ENCODE measurements at regions of chr2 and their contacts with region 1.

Region 1: DNA sequence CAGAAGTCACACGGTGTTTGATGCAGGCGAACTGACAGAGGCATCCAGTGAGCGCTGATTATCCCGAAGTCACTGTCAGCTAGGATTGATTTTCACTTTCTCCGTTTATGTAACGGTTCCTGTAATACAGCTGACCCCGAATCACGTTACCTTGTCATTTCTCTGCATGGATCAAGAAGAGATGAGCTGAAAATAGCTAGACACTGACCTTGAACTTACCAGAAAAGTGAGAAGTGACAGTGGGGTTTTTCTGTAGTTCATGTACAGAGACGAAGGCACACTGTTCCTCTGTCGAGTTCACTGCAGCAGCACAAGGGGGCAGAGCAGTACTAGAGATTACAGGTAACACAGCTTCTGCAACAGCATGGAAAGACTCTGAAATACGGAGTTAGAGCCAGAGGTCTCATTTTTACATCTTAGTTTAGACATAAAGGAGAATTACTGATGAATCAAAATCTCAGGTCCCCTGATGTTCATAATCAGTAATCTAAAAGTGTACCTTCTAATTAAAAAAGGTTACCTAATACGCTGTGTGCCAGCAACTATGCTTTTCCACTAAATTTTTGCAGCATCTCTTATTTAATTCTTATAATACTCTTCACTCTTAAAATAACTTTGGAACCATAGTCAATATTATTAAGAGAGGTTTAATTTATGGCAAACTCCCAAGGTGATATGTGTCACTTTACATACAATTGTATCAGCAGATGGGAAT is 33.1 kb downstream of the ARHGAP15 start:
- DNase-seq: peak; percentile 50 to 55
- H3K4me3 ChIP-seq: no peak overlapping the region
- H3K4me3 Mint-ChIP-seq: no peak overlapping the region
- H3K27ac Mint-ChIP-seq: no peak overlapping the region
- H3K4me1 ChIP-seq: no peaks in the 10 kb centered on the region
- H3K4me1 Mint-ChIP-seq: no peaks in the 10 kb centered on the region
- H3K27me3 ChIP-seq: no peaks in the 10 kb centered on the region; the same call in 1 of the 2 replicates
- H3K27me3 Mint-ChIP-seq: peaks cover 23% of the 10 kb centered on the region
- CTCF ChIP-seq: peak; percentile 52 to 82

Region 2: DNA sequence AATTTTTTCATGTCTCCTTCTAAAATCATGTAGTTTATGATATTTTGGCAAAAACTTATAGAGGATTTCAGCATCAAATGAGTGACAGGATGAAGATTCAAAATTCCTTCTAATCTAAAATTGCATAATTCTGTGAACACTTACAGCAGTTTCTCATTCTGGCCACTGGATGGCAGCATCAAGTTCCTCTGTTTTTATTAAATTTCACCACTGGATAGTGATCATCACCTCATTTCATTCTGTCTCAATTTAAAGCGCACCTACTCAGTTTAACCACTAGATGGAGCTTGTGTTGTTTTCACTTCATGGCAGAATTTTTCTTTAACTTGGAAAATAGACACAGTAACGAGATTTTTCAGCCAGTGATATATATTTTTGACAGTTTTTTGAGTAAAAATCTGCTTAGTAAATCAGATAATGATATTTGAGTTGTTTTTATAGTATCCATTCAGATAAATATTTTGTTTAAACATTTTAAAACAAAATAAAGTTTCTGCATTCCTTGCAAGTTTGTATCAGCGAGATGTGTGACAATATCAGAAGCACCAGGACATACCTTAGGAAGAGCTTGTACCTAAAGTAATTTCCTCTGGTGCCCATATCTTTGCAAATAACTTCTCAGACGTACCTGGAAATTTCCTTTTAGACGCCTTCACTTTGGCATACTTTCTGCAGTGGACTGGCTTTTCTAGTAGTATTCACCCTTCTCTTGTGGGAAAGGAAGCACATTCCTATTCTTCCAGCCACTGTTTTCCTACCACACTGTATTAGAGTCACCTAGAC is 127.8 kb before region 1 on chr2:
- CTCF ChIA-PET with region 1: no interaction called
- POLR2A ChIA-PET with region 1: no interaction called
- intact Hi-C with region 1: loop called (anchors 2 kb)
- DNase-seq: peak; percentile 61 to 69
- H3K4me3 ChIP-seq: no peak overlapping the region
- H3K4me3 Mint-ChIP-seq: no peak overlapping the region
- H3K27ac Mint-ChIP-seq: no peak overlapping the region
- H3K4me1 ChIP-seq: peaks cover 12% of the 10 kb centered on the region
- H3K4me1 Mint-ChIP-seq: peaks cover 10% of the 10 kb centered on the region
- H3K27me3 ChIP-seq: no peaks in the 10 kb centered on the region
- H3K27me3 Mint-ChIP-seq: no peaks in the 10 kb centered on the region
- CTCF ChIP-seq: peak; percentile 93

Region 3: DNA sequence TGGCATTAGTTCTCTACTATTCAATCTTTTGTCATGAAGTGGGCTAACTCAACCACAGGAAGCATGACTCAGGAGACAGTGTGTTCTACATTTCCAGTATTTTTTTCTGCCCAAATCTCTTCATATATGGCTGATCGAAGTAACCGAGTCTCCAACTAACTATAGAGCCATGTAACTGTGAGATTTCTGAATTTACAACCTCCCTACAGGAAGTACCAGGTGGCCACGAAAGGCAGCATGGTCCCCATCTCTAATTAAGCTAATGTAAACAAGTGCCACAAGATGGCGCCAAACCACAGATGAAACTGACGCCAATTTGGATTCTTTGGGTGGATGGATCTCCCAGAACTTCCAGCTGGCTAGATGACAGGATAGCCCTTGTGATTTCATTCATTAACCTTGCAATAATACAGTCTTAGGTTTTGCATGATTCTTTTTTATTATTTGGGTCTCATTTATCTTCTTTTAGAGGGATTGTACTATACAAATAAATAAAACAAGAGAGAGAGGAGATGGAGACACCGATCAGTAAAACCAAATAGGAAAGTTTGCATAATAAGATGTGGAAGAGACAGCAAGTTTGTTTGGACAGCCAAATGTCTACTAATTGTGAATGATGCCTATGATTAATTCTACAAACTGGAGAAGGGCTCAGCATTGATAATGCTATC is 51.4 kb before region 1 on chr2:
- CTCF ChIA-PET with region 1: no interaction called
- POLR2A ChIA-PET with region 1: no interaction called
- intact Hi-C with region 1: loop called (anchors 2 kb)
- DNase-seq: peak; percentile 43 to 59
- H3K4me3 ChIP-seq: no peak overlapping the region
- H3K4me3 Mint-ChIP-seq: no peak overlapping the region
- H3K27ac Mint-ChIP-seq: no peak overlapping the region
- H3K4me1 ChIP-seq: no peaks in the 10 kb centered on the region
- H3K4me1 Mint-ChIP-seq: no peaks in the 10 kb centered on the region
- H3K27me3 ChIP-seq: no peaks in the 10 kb centered on the region
- H3K27me3 Mint-ChIP-seq: peaks cover 8% of the 10 kb centered on the region
- CTCF ChIP-seq: peak; percentile 66 to 72

Region 4: DNA sequence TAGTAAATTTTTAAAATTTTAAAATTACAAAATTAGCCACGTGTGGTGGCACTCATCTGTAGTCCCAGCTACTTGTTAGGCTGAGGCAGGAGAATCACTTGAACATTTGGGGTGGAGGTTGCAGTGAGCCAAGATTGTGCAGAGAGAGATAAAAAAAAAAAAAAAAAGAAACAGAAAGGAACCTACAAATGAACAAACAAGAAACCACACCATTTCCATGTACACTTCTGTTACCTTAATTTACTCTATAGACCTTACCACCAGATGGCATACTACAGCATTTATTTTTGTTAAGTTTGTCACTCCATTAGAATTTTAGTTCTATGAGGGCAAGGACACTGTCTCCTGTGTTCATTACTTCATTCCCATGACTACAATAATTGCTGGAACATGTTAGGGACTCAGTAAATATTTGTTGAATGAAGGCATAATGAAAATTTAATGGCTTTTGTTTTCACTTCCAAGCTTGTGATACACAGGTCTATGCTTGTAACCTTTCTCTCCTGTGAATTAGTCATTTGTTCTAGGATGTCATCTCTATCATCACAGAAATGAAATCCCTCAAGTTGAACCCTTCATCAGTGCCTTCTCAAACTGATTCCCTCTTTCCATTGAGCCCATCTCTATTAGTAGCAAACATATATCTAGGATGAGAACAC is 43.0 kb after region 1 on chr2:
- CTCF ChIA-PET with region 1: no interaction called
- POLR2A ChIA-PET with region 1: no interaction called
- intact Hi-C with region 1: loop called (anchors 1 kb)
- DNase-seq: no peak
- H3K4me3 ChIP-seq: no peak overlapping the region
- H3K4me3 Mint-ChIP-seq: no peak overlapping the region
- H3K27ac Mint-ChIP-seq: no peak overlapping the region
- H3K4me1 ChIP-seq: no peaks in the 10 kb centered on the region
- H3K4me1 Mint-ChIP-seq: no peaks in the 10 kb centered on the region
- H3K27me3 ChIP-seq: no peaks in the 10 kb centered on the region
- H3K27me3 Mint-ChIP-seq: peaks cover 14% of the 10 kb centered on the region
- CTCF ChIP-seq: peak; percentile 25 to 39

Region 5: GRCh38 chr2:143217512-143218115 is 55.3 kb after region 1 on chr2:
- CTCF ChIA-PET with region 1: interaction called, 4 read pairs
- POLR2A ChIA-PET with region 1: no interaction called
- intact Hi-C with region 1: loop called (anchors 1 kb)
- DNase-seq: no peak
- H3K4me3 ChIP-seq: no peak overlapping the region
- H3K4me3 Mint-ChIP-seq: no peak overlapping the region
- H3K27ac Mint-ChIP-seq: no peak overlapping the region
- H3K4me1 ChIP-seq: no peaks in the 10 kb centered on the region
- H3K4me1 Mint-ChIP-seq: no peaks in the 10 kb centered on the region
- H3K27me3 ChIP-seq: no peaks in the 10 kb centered on the region
- H3K27me3 Mint-ChIP-seq: peaks cover 2% of the 10 kb centered on the region
- CTCF ChIP-seq: no peak

Region 6: GRCh38 chr2:143259368-143259958 is 97.2 kb after region 1 on chr2:
- CTCF ChIA-PET with region 1: interaction called, 3 read pairs
- POLR2A ChIA-PET with region 1: no interaction called
- intact Hi-C with region 1: loop called (anchors 1 kb)
- DNase-seq: peak; percentile 61 to 66
- H3K4me3 ChIP-seq: no peak overlapping the region
- H3K4me3 Mint-ChIP-seq: no peak overlapping the region
- H3K27ac Mint-ChIP-seq: no peak overlapping the region
- H3K4me1 ChIP-seq: no peaks in the 10 kb centered on the region
- H3K4me1 Mint-ChIP-seq: no peaks in the 10 kb centered on the region
- H3K27me3 ChIP-seq: no peaks in the 10 kb centered on the region
- H3K27me3 Mint-ChIP-seq: peaks cover 9% of the 10 kb centered on the region
- CTCF ChIP-seq: peak; percentile 79 to 82

Region 7: DNA sequence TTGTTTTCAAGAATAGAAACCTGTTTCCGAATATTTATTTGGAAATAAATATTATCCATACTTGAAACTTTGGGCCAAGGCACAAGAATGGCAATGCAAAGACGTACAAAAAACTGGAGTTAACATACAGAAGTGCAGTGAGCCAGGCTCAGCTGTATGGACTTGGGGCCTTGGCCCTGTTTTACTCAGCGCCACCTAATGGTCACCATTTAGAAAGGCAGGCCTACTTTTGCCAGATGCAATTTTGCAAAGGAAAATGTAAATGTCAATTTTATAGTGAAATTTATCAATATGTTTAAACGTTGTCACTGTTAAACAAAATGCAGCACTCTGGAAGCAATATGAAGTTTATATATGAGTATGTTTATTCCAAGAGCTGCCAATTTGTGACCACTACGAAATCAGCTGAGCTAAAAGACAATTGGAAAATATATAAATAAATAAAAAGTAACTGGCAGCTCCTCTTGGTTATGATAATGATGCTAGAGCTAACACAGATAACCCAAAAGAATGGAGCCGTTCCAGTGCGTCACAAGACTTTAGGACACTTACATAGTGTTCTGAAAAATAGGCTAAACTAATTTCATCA is 121.9 kb after region 1 on chr2:
- CTCF ChIA-PET with region 1: interaction called, 5 read pairs
- POLR2A ChIA-PET with region 1: no interaction called
- intact Hi-C with region 1: loop called (anchors 1 kb)
- DNase-seq: peak in 1 of 2 experiments; percentile 51
- H3K4me3 ChIP-seq: no peak overlapping the region
- H3K4me3 Mint-ChIP-seq: no peak overlapping the region
- H3K27ac Mint-ChIP-seq: no peak overlapping the region
- H3K4me1 ChIP-seq: no peaks in the 10 kb centered on the region
- H3K4me1 Mint-ChIP-seq: no peaks in the 10 kb centered on the region
- H3K27me3 ChIP-seq: no peaks in the 10 kb centered on the region
- H3K27me3 Mint-ChIP-seq: peaks cover 8% of the 10 kb centered on the region
- CTCF ChIP-seq: peak; percentile 60 to 76

Measured in Caco-2 (cell line).